Lower leg skin (tissue), 4 donors: ENCODE measurements at regions of chr13 and their contacts with region 1.

Region 1: DNA sequence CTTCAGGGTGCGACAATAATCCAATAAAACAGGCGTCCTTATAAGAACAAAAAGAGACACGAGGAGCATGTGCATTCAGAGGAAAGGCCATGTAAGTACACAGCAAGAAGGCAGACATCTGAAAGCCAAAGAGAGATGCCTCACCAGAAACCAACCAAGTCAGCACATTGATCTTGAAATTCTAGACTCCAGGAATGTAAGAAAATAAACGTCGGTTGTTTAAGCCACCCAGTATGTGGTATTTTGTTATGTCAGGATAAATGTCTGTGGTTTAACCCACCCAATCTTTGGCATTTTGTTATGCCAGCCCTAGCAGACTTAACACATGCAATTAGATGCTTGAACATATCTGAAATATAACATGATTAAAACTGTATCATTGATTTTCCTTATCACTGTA is 452.0 kb downstream of the SLITRK6 start:
- DNase-seq: no peak
- H3K4me3 ChIP-seq: no peak overlapping the region
- CTCF ChIP-seq: no peak
- POLR2A ChIP-seq: no peak

Region 2: DNA sequence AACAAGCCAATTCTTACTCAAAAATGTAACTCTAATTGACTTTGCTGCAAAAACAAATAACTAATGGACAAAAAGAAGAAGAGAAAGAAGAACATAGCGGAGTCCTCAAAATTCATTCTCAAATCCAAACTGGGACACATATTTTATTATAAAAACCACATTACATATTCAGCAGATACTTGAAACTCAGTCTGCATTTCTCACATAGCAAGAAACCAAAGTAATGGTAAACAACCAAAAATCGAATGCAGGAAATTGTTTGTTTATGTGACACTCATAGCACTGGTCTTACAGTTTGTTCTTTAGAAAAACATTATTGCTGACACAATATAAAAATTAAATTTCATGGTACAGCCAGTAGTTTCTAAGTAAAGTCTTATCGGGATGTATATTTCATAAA is 337.8 kb before region 1 on chr13:
- intact Hi-C with region 1: no loop called
- DNase-seq: no peak
- H3K4me3 ChIP-seq: no peak overlapping the region
- CTCF ChIP-seq: no peak
- POLR2A ChIP-seq: no peak

Region 3: GRCh38 chr13:86438034-86438433 is 1090.8 kb after region 1 on chr13:
- intact Hi-C with region 1: loop called (anchors 5 kb)
- DNase-seq: no peak
- H3K4me3 ChIP-seq: no peak overlapping the region
- CTCF ChIP-seq: no peak
- POLR2A ChIP-seq: no peak

Region 4: GRCh38 chr13:86870444-86870843 is 1523.2 kb after region 1 on chr13:
- intact Hi-C with region 1: loop called (anchors 5 kb)
- DNase-seq: no peak
- H3K4me3 ChIP-seq: no peak overlapping the region
- CTCF ChIP-seq: no peak
- POLR2A ChIP-seq: no peak